ENCODE measurements at regions of chr3 and their contacts with region 1.

Region 1: GRCh38 chr3:132682201-132682600 is 22.1 kb downstream of the UBA5 start:
- DNase-seq: no peak
- H3K4me3 ChIP-seq: no peak overlapping the region
- H3K27ac ChIP-seq: no peak overlapping the region
- H3K4me1 ChIP-seq: no peaks in the 10 kb centered on the region
- CTCF ChIP-seq: no peak

Region 2: DNA sequence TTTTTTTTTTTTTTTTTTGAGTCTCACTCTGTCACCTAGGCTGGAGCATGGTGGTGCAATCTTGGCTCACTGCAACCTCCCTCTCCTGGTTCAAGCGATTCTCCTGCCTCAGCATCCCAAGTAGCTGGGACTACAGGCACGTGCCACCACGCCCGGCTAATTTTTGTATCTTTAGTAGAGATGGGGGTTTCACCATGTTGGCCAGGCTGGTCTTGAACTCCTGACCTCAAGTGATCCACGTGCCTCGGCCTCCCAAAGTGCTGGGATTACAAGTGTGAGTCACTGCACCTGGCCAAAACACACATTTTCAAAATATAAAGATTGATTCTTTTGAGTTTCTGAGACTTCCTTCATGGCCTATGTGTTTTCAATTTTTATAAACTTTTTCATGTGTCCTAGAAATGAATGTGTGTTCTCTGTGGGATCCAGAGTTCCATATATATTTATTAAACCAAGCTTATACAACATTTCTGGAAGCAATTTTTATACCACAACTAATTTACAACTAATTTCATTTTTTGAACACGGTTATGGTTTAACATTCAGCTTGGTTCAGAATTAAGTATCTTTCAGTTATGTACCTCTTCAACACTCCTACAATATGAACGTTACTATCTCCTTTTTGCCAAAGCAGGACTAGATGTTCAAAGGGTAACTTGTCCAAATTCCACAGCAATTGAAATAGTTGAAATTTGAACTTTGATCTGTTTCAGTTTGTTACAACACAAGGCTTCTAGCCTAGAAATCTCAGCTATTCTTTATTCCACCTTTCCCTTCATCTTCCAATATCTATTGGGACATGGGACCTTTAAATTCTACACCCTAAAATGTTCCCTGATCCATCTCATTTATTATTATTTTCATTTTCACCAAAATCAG is 24.1 kb before region 1 on chr3:
- CTCF ChIA-PET with region 1: no interaction called
- POLR2A ChIA-PET with region 1: no interaction called
- intact Hi-C with region 1: no loop called
- DNase-seq: no peak
- H3K4me3 ChIP-seq: peak overlapping the region; percentile 78
- H3K27ac ChIP-seq: no peak overlapping the region
- H3K4me1 ChIP-seq: peaks cover 24% of the 10 kb centered on the region
- CTCF ChIP-seq: no peak

Region 3: DNA sequence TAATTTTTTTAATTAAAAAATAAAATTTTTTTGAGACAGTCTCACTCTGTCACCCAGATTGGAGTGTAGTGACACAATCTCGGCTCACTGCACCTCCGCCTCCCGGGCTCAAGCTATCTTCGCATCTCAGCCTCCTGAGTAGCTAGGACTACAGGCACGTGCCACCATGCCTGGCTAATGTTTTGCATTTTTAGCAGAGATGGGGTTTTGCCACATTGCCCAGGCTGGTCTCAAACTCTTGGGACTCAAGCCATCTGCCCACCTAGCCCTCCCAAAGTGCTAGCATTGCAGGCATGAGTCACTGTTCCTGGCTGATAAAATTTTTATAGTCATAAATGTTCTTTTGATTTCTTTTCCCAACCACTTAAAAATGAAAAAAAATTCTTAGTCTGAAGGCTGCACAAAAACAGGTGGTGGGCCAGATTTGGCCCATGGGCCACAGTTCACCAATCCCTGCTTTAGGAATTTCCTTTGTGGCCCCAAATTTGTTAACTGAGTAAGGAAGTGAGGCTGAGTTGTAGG is 12.9 kb before region 1 on chr3:
- CTCF ChIA-PET with region 1: no interaction called
- POLR2A ChIA-PET with region 1: interaction called, 22 read pairs
- intact Hi-C with region 1: no loop called
- DNase-seq: no peak
- H3K4me3 ChIP-seq: no peak overlapping the region
- H3K27ac ChIP-seq: no peak overlapping the region
- H3K4me1 ChIP-seq: no peaks in the 10 kb centered on the region
- CTCF ChIP-seq: no peak

Region 4: GRCh38 chr3:132749786-132750185 is 67.6 kb after region 1 on chr3:
- CTCF ChIA-PET with region 1: no interaction called
- POLR2A ChIA-PET with region 1: no interaction called
- intact Hi-C with region 1: no loop called
- DNase-seq: no peak
- H3K4me3 ChIP-seq: no peak overlapping the region
- H3K27ac ChIP-seq: no peak overlapping the region
- H3K4me1 ChIP-seq: no peaks in the 10 kb centered on the region
- CTCF ChIP-seq: no peak

Measured in OCI-LY7 (cell line).